Mammary epithelial cell (primary cell): ENCODE measurements at regions of chr13 and their contacts with region 1.

Region 1: GRCh38 chr13:42969558-42970172 is 22.4 kb downstream of the EPSTI1 start:
- DNase-seq: peak; percentile 40
- H3K4me3 ChIP-seq: no peak overlapping the region
- H3K27ac ChIP-seq: no peak overlapping the region
- H3K4me1 ChIP-seq: peaks cover 7% of the 10 kb centered on the region
- H3K27me3 ChIP-seq: no peaks in the 10 kb centered on the region
- CTCF ChIP-seq: peak; percentile 84 to 85

Region 2: DNA sequence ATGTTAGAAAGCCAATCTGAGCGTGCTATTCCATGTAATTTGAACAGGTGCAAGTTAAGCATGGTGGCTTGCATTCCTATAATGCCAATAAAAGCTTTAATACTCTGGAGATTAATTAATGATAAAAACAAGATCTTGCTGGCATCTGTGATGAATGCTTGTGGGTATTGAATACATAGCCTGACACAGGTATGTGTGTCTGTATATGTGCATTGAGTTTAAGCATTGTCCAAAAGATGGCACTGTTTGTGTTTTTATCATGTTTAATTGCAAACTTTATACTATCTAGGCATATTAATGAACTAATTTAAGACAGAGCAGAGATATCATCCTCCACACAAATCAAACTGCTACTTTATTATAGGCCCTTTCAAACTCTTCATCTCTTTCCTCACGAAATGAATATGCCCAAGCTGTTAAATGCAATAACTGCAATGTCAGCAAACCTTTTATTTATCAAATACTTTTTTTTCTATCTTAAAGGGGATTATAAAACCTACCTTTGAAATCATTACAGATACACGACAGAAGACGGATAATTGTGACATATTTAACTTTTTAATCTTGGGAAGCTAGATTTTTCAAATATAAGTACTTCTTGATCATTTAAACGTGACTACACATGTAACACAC is 309.2 kb before region 1 on chr13:
- CTCF ChIA-PET with region 1: no interaction called
- dilution Hi-C with region 1: no loop called
- in situ Hi-C with region 1: no loop called
- intact Hi-C with region 1: loop called (anchors 2 kb)
- DNase-seq: peak; percentile 6
- H3K4me3 ChIP-seq: no peak overlapping the region
- H3K27ac ChIP-seq: no peak overlapping the region
- H3K4me1 ChIP-seq: no peaks in the 10 kb centered on the region
- H3K27me3 ChIP-seq: peaks cover 2% of the 10 kb centered on the region
- CTCF ChIP-seq: peak; percentile 32 to 49

Region 3: DNA sequence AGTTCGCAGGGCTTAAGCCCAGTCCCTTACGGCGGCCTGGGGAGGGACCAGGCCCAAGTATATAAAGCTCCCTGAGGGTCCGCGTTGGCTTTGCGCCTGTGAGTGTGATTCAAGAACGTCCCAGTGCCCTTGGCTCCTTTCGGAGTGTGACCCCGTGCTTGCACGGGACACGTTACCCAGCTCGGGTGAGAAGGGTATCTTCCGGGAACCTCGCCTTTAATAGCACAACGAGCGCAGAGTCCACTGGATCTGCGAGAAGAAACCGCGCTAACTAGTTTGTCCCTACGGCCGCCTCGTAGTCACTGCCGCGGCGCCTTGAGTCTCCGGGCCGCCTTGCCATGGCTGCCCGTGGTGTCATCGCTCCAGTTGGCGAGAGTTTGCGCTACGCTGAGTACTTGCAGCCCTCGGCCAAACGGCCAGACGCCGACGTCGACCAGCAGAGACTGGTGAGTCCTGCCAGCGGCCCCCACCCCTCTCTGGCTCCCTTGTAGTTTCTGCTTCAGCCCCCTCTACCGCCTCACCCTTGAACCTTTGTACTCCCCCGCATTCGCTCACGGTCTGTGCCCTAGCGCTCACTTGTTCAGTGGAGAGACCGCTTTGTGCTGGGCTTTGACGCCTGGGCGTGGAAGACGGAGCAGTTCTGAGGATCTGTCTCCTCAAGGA is 53.8 kb after region 1 on chr13 and contains the start of gene DNAJC15:
- CTCF ChIA-PET with region 1: no interaction called
- dilution Hi-C with region 1: no loop called
- in situ Hi-C with region 1: no loop called
- intact Hi-C with region 1: loop called (anchors 2 kb)
- DNase-seq: no peak
- H3K4me3 ChIP-seq: peak within 1 kb of the TSS; percentile 60 to 78 (median 64)
- H3K27ac ChIP-seq: peak within 1 kb of the TSS; percentile 80
- H3K4me1 ChIP-seq: peaks cover 5% of the 10 kb centered on the region
- H3K27me3 ChIP-seq: no peaks in the 10 kb centered on the region
- CTCF ChIP-seq: peak in 1 of 2 donors; percentile 28
- total RNA-seq, gene DNAJC15: 9.3 to 20.7 TPM

Region 4: DNA sequence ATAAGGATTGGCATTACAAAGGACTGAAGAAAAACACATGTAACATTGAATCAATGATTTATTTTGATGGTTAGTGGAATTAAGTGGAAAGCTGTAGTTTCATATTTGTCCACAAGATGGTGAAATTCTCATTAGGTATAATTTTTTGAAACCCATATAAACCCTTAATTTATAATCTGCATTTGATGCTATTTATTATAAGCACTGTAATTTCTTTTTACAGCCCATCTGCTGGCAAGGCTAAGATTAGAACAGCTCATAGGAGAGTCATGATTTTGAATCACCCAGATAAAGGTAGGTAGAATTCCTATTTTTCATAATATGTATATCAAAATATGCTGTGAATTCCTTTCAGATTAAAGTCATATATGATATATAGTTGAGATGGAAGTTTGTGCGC is 115.9 kb after region 1 on chr13:
- CTCF ChIA-PET with region 1: no interaction called
- dilution Hi-C with region 1: no loop called
- in situ Hi-C with region 1: no loop called
- intact Hi-C with region 1: loop called (anchors 2 kb)
- DNase-seq: peak; percentile 12
- H3K4me3 ChIP-seq: no peak overlapping the region
- H3K27ac ChIP-seq: no peak overlapping the region
- H3K4me1 ChIP-seq: no peaks in the 10 kb centered on the region
- H3K27me3 ChIP-seq: no peaks in the 10 kb centered on the region
- CTCF ChIP-seq: peak; percentile 44 to 45

Region 5: GRCh38 chr13:43303033-43303729 is 333.5 kb after region 1 on chr13:
- CTCF ChIA-PET with region 1: no interaction called
- dilution Hi-C with region 1: no loop called
- in situ Hi-C with region 1: no loop called
- intact Hi-C with region 1: loop called (anchors 10 kb)
- DNase-seq: peak; percentile 23
- H3K4me3 ChIP-seq: no peak overlapping the region
- H3K27ac ChIP-seq: no peak overlapping the region
- H3K4me1 ChIP-seq: peaks cover 17% of the 10 kb centered on the region
- H3K27me3 ChIP-seq: no peaks in the 10 kb centered on the region
- CTCF ChIP-seq: peak; percentile 16 to 69

Region 6: DNA sequence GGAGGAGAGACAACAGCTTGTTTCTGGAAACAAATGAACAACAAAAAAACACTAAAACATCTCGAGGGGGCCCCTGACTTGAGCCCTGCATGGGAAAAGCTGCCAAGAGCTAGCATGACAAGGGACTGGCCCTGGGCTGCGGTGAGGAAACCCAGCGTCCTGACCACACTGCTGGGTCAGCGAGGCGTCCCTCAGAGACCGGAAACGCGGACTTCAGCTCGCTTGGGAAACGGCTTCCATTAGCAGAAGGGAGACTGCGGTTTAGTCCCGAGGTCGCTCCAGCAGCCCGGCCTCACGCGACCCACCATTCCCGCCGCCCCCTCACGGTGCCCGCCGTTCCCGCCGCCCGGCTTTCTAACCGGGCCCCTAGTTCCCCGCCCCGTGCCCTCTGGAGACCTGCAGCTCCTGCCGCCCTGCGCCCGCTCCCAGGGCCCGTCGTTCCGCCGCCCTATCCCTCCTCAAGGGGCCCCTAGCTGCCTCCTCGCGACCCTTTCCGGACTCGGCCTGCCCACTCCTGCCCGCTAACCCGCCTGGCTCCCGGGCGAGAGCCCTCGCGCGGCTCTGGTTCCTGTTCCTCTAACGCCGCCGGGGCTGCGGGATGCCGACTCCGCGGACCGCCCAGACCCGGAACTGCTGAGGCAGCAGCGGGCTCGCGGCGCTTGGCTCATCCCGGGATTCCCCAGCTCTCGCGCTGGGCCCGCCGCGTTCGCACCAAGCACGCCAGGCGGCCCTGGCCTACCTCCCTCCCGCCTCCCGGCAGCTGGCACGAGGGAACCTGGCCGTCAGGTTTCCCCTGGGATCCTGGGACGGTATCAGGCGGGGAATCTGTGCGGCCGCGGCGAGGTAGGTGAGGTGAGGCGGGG is 909.5 kb after region 1 on chr13 and contains the start of gene CCDC122:
- CTCF ChIA-PET with region 1: no interaction called
- dilution Hi-C with region 1: no loop called
- in situ Hi-C with region 1: no loop called
- intact Hi-C with region 1: loop called (anchors 5 kb)
- DNase-seq: peak; percentile 89
- H3K4me3 ChIP-seq: peak within 1 kb of the TSS; percentile 83 to 88 (median 88)
- H3K27ac ChIP-seq: peak within 1 kb of the TSS; percentile 87
- H3K4me1 ChIP-seq: peaks cover 22% of the 10 kb centered on the region
- H3K27me3 ChIP-seq: no peaks in the 10 kb centered on the region
- CTCF ChIP-seq: no peak
- total RNA-seq, gene CCDC122: 6.7 to 12.1 TPM